ENCODE measurements at regions of chr19 and their contacts with region 1.

Region 1: GRCh38 chr19:1672038-1672768 is 19.8 kb upstream of the TCF3 start:
- DNase-seq: peak; percentile 61
- ATAC-seq: peak; percentile 59
- H3K4me3 Mint-ChIP-seq: no peak overlapping the region
- H3K27ac Mint-ChIP-seq: no peak overlapping the region
- H3K4me1 Mint-ChIP-seq: peaks cover 15% of the 10 kb centered on the region
- H3K27me3 Mint-ChIP-seq: peaks cover 55% of the 10 kb centered on the region

Region 2: DNA sequence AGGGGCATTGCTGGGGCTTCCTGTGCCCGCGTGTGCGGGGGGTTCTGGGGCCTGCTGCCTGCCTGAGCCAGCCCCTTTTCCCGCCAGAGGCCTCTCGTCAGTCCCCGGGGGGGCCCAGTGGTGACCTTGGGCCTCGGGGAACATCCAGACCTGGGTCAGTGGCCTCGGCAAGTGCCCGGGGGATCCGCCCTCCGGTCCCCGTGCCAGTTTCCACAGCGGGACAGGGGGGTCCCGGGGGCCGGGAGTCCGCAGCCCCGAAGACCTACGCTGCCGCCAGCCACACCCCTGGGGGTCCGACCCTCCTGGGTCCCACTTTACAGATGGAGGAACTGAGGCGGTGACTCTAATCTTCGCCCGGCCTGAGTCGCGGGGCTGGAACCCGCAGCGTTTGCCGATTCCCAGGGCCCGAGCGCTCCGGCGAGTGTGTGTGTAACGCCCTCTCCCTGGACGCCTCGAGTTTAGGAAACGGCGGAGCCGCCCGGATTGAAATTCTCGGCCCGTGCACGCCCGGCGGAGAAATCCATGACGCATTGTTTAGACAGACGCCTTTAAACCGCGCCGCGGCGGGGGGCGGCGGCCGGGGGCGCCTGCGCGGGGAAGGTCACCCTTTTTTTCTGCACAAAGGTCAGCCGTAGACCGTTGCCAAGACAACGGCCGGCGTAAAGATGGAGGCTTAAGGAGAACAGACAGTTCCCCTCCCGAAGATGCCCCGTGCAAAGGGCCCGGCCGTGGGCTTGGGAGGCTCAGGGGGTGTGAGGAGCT is 347.2 kb before region 1 on chr19:
- CTCF ChIA-PET with region 1: no interaction called
- DNase-seq: no peak
- ATAC-seq: no peak
- H3K4me3 Mint-ChIP-seq: no peak overlapping the region
- H3K27ac Mint-ChIP-seq: no peak overlapping the region
- H3K4me1 Mint-ChIP-seq: no peaks in the 10 kb centered on the region
- H3K27me3 Mint-ChIP-seq: peaks cover 27% of the 10 kb centered on the region

Region 3: DNA sequence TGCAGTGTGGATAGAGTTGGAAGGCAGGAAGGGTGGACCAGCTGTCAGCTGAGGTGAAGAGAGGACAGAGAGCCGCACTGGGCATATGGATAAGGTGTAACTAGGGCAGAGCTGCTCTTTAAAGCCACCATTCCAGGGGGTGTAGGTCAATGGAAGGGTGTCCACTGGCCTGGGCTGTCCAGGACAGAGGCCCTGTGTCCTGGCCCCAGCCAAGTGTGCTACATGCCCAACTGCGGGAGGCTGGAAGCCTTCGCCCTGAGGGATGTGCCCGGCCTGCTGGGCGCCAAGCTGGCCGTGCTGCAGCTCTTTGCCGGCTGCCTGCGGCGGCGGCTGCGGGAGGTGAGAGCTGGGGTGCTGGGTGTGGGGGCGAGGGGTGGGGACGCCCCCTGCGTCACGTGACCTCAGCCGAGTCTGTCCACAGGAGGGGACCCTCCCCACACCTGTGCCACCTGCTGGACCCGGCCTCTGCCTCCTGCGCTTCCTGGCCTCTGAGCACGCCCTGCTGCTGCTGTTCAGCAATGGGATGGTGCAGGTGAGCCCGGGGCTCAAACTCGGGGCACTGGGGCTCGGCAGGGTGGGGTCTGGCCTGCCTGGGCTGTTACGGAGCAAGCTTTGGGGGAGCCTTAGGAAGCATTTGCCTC is 138.6 kb before region 1 on chr19:
- CTCF ChIA-PET with region 1: no interaction called
- DNase-seq: no peak
- ATAC-seq: no peak
- H3K4me3 Mint-ChIP-seq: no peak overlapping the region
- H3K27ac Mint-ChIP-seq: no peak overlapping the region
- H3K4me1 Mint-ChIP-seq: no peaks in the 10 kb centered on the region
- H3K27me3 Mint-ChIP-seq: no peaks in the 10 kb centered on the region

Region 4: GRCh38 chr19:1592755-1593500 is 79.3 kb before region 1 on chr19 and contains the start of gene MBD3:
- CTCF ChIA-PET with region 1: interaction called, 11 read pairs
- DNase-seq: peak; percentile 91
- ATAC-seq: peak; percentile 83
- H3K4me3 Mint-ChIP-seq: peak within 1 kb of the TSS; percentile 88
- H3K27ac Mint-ChIP-seq: peak within 1 kb of the TSS; percentile 89
- H3K4me1 Mint-ChIP-seq: peaks cover 19% of the 10 kb centered on the region
- H3K27me3 Mint-ChIP-seq: no peaks in the 10 kb centered on the region
- total RNA-seq, gene MBD3: 87.4 to 101 TPM

Region 5: GRCh38 chr19:1651568-1652291 is 20.5 kb before region 1 on chr19:
- CTCF ChIA-PET with region 1: interaction called, 15 read pairs
- DNase-seq: peak; percentile 58
- ATAC-seq: peak; percentile 5
- H3K4me3 Mint-ChIP-seq: peak overlapping the region; percentile 81
- H3K27ac Mint-ChIP-seq: peak overlapping the region; percentile 88
- H3K4me1 Mint-ChIP-seq: peaks cover 30% of the 10 kb centered on the region
- H3K27me3 Mint-ChIP-seq: no peaks in the 10 kb centered on the region

Region 6: DNA sequence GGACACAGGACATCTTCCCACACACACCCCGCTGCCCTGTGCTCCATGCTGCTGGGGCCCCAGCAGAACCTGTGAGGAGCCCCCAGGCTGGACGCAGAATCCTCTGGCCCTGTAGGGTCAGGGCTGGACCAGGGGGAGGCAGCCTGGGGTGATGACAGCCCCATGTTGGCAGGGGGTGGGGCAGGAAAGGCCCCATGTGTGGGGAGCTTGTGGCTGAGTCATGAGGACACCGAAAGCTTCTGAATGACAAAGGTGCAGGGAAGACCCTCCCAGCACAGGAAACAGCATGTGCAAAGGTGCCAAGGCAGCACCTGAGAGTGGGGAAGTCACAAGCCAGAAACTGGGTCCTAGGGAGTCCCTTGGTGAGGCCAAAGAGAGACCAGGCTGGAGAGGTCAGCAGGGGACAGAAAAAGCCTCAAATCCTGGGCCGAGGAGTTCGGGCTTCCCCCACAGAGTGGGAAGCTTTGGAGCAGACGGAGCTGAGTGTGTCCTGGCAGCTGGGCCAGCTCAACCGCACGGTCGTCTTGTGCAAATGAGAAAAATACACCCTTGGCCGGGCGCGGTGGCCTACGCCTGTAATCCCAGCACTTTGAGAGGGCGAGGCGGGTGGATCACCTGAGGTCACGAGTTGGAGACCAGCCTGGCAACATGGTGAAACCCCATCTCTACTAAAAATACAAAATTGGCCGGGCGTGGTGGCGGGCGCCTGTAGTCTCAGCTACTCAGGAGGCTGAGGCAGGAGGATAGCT is 122.4 kb after region 1 on chr19:
- CTCF ChIA-PET with region 1: interaction called, 26 read pairs
- DNase-seq: no peak
- ATAC-seq: no peak
- H3K4me3 Mint-ChIP-seq: no peak overlapping the region
- H3K27ac Mint-ChIP-seq: no peak overlapping the region
- H3K4me1 Mint-ChIP-seq: peaks cover 9% of the 10 kb centered on the region
- H3K27me3 Mint-ChIP-seq: no peaks in the 10 kb centered on the region